B cell (primary cell): ENCODE measurements at regions of chr1 and their contacts with region 1.

Region 1: GRCh38 chr1:101112051-101112780 is 86.6 kb upstream of the DPH5 start:
- DNase-seq: peak; percentile 90
- ATAC-seq: peak; percentile 95
- H3K4me3 ChIP-seq: peak overlapping the region in 1 of 5 experiments; percentile 14
- H3K4me3 Mint-ChIP-seq: peak overlapping the region; percentile 79
- H3K27ac ChIP-seq: peak overlapping the region; percentile 80 to 95
- H3K27ac Mint-ChIP-seq: peak overlapping the region; percentile 89
- H3K4me1 ChIP-seq: peaks cover 28 to 31% of the 10 kb centered on the region in 2 donors
- H3K4me1 Mint-ChIP-seq: peaks cover 39% of the 10 kb centered on the region
- H3K27me3 ChIP-seq: no peaks in the 10 kb centered on the region
- H3K27me3 Mint-ChIP-seq: no peaks in the 10 kb centered on the region
- CTCF ChIP-seq: peak; percentile 32

Region 2: DNA sequence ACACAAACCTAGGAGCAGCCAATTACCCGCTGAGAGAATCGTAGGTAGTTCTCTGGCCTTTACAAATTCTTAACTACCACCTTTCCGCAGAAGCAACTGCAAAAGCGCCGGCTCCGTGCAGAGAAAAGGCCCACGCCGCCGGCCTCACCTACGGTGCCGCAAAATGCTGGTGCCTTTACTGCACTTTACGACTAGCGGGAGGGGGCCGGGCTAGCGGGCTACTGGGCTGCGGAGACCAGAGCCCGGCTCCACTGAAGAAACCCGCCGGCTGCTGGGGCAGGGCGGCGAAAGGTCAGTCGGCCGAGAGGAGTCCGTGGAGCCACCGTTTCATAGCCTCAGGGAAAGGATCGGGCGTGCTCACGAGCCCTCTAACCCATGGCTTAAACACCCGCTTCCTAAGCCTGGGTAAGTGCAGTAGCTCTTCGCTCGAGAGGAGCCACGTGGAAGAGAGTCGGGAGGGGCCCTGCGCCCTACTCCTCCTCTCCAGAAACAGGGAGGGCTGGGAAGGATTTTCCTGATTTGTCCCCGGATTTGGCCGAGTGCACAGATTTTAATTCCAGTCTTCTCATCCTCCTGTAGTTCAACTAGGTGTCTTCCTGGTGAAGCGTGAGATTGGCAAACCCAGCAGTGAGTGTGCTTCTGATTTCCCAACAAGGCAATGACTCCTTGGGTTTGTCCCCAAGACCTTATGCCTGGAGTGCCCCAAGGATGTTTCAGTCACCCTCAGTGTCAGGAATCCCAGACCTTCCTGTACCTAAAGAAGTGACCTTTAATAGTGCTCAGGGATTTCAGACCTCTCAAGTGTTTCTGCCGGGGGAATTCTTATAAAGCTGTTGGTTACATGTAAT is 86.3 kb before region 1 on chr1 and contains the start of gene DPH5:
- CTCF ChIA-PET with region 1: no interaction called
- POLR2A ChIA-PET with region 1: no interaction called
- intact Hi-C with region 1: loop called (anchors 1 kb)
- DNase-seq: peak; percentile 90
- ATAC-seq: peak; percentile 96
- H3K4me3 ChIP-seq: peak within 1 kb of the TSS; percentile 81 to 97 (median 92)
- H3K4me3 Mint-ChIP-seq: peak within 1 kb of the TSS; percentile 98
- H3K27ac ChIP-seq: peak within 1 kb of the TSS; percentile 78 to 85
- H3K27ac Mint-ChIP-seq: peak within 1 kb of the TSS; percentile 97
- H3K4me1 ChIP-seq: peaks cover 45 to 47% of the 10 kb centered on the region in 2 donors
- H3K4me1 Mint-ChIP-seq: peaks cover 50% of the 10 kb centered on the region
- H3K27me3 ChIP-seq: no peaks in the 10 kb centered on the region
- H3K27me3 Mint-ChIP-seq: no peaks in the 10 kb centered on the region
- CTCF ChIP-seq: no peak
- total RNA-seq, gene DPH5: 39.4 and 42.5 TPM in 2 replicates

Region 3: DNA sequence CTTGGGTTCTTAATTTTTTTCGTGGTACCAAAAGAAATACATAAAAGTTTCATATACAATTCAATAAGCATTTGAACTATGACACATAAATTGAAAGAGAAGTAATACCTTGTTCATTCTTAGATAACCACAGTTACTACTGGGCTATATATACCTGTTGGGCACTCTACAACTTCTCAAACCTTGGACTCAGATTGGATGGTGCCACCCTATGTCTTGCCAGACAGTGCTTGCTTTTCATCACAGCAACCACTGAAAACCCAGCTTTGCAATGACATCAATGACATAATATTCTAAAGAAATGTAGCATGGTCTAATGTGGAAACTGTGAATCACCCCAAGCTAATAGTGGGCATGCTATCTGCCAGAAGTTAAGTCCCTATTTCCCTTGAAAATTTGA is 23.8 kb before region 1 on chr1:
- CTCF ChIA-PET with region 1: no interaction called
- POLR2A ChIA-PET with region 1: no interaction called
- intact Hi-C with region 1: no loop called
- DNase-seq: no peak
- ATAC-seq: no peak
- H3K4me3 ChIP-seq: no peak overlapping the region
- H3K4me3 Mint-ChIP-seq: no peak overlapping the region
- H3K27ac ChIP-seq: no peak overlapping the region
- H3K27ac Mint-ChIP-seq: no peak overlapping the region
- H3K4me1 ChIP-seq: peaks cover 0 to 3% of the 10 kb centered on the region in 2 donors
- H3K4me1 Mint-ChIP-seq: peaks cover 11% of the 10 kb centered on the region
- H3K27me3 ChIP-seq: no peaks in the 10 kb centered on the region
- H3K27me3 Mint-ChIP-seq: no peaks in the 10 kb centered on the region
- CTCF ChIP-seq: no peak

Region 4: DNA sequence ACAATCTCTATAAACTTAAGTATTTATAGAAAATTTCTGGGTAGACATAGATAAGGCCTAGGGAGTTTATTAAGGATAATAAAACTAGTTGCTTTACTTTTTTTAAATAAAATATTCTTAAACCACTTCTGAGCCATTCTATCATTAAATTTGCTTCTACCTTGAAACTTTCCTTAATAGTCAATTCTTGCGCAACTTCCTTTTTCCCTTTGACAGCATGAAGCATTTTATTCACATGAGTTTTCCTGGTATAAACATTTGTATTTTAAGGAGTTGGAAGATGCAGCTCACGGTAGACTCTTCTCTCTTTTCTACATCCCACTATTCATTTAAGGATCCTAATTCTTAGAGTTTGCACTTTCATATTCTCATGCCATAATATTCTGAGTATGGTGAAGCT is 10.9 kb before region 1 on chr1:
- CTCF ChIA-PET with region 1: no interaction called
- POLR2A ChIA-PET with region 1: no interaction called
- intact Hi-C with region 1: no loop called
- DNase-seq: no peak
- ATAC-seq: no peak
- H3K4me3 ChIP-seq: no peak overlapping the region
- H3K4me3 Mint-ChIP-seq: no peak overlapping the region
- H3K27ac ChIP-seq: no peak overlapping the region
- H3K27ac Mint-ChIP-seq: no peak overlapping the region
- H3K4me1 ChIP-seq: peaks cover 3 to 8% of the 10 kb centered on the region in 2 donors
- H3K4me1 Mint-ChIP-seq: peaks cover 14% of the 10 kb centered on the region
- H3K27me3 ChIP-seq: no peaks in the 10 kb centered on the region
- H3K27me3 Mint-ChIP-seq: no peaks in the 10 kb centered on the region
- CTCF ChIP-seq: no peak

Region 5: DNA sequence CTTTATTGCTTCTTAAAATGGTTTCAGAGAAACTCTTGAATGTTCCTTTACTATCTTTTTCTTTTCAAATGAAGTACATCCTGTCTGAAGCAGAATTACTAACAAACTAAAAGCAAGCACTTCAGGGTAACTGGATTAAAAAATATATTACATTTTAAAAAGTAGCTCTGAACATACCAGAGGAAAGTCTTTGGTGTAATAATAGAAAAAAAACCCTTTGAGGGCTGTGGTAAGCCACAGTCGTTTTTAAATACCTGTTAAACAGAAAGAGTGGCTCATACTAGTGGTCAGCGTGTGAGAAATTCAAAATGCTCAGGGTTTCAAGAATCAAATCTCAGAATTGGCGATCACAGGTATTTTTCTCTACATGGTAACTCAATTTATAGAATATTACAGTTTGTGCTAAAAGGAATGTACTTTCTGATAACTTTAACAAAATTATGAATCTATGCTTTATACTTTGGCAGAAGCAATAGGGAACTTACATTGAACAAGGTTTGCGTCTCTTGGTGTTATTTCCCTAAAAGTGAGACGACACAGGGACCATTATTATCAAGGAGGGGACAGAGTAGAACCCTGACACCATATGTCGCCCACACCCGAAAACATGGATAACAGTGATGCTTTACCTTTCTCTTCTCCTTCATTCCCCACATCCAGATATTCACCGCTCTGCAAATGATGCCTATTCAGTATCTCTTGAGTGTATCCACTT is 10.4 kb after region 1 on chr1:
- CTCF ChIA-PET with region 1: interaction called, 20 read pairs
- POLR2A ChIA-PET with region 1: interaction called, 20 read pairs
- intact Hi-C with region 1: no loop called
- DNase-seq: peak; percentile 39
- ATAC-seq: peak; percentile 21
- H3K4me3 ChIP-seq: peak overlapping the region in 3 of 5 experiments; percentile 3 to 47 (median 6)
- H3K4me3 Mint-ChIP-seq: peak overlapping the region; percentile 73
- H3K27ac ChIP-seq: peak overlapping the region in 1 of 2 donors; percentile 58
- H3K27ac Mint-ChIP-seq: peak overlapping the region; percentile 44
- H3K4me1 ChIP-seq: peaks cover 17 to 31% of the 10 kb centered on the region in 2 donors
- H3K4me1 Mint-ChIP-seq: peaks cover 46% of the 10 kb centered on the region
- H3K27me3 ChIP-seq: no peaks in the 10 kb centered on the region
- H3K27me3 Mint-ChIP-seq: no peaks in the 10 kb centered on the region
- CTCF ChIP-seq: no peak

Region 6: GRCh38 chr1:101128211-101128727 is 16.1 kb after region 1 on chr1:
- CTCF ChIA-PET with region 1: interaction called, 20 read pairs
- POLR2A ChIA-PET with region 1: interaction called, 20 read pairs
- intact Hi-C with region 1: loop called (anchors 1 kb)
- DNase-seq: peak; percentile 75
- ATAC-seq: peak; percentile 93
- H3K4me3 ChIP-seq: peak overlapping the region in 3 of 5 experiments; percentile 37 to 59 (median 40)
- H3K4me3 Mint-ChIP-seq: peak overlapping the region; percentile 57
- H3K27ac ChIP-seq: peak overlapping the region; percentile 59 to 74
- H3K27ac Mint-ChIP-seq: peak overlapping the region; percentile 83
- H3K4me1 ChIP-seq: peaks cover 30 to 49% of the 10 kb centered on the region in 2 donors
- H3K4me1 Mint-ChIP-seq: peaks cover 60% of the 10 kb centered on the region
- H3K27me3 ChIP-seq: no peaks in the 10 kb centered on the region
- H3K27me3 Mint-ChIP-seq: no peaks in the 10 kb centered on the region
- CTCF ChIP-seq: no peak

Region 7: GRCh38 chr1:101136739-101137138 is 24.5 kb after region 1 on chr1:
- CTCF ChIA-PET with region 1: interaction called, 24 read pairs
- POLR2A ChIA-PET with region 1: no interaction called
- intact Hi-C with region 1: no loop called
- DNase-seq: peak; percentile 54
- ATAC-seq: peak; percentile 70
- H3K4me3 ChIP-seq: no peak overlapping the region
- H3K4me3 Mint-ChIP-seq: peak overlapping the region; percentile 17
- H3K27ac ChIP-seq: peak overlapping the region; percentile 1 to 32
- H3K27ac Mint-ChIP-seq: peak overlapping the region; percentile 70
- H3K4me1 ChIP-seq: peaks cover 38 to 40% of the 10 kb centered on the region in 2 donors
- H3K4me1 Mint-ChIP-seq: peaks cover 49% of the 10 kb centered on the region
- H3K27me3 ChIP-seq: no peaks in the 10 kb centered on the region
- H3K27me3 Mint-ChIP-seq: no peaks in the 10 kb centered on the region
- CTCF ChIP-seq: no peak

Region 8: GRCh38 chr1:101167891-101168290 is 55.7 kb after region 1 on chr1:
- CTCF ChIA-PET with region 1: no interaction called
- POLR2A ChIA-PET with region 1: no interaction called
- intact Hi-C with region 1: no loop called
- DNase-seq: no peak
- ATAC-seq: no peak
- H3K4me3 ChIP-seq: no peak overlapping the region
- H3K4me3 Mint-ChIP-seq: no peak overlapping the region
- H3K27ac ChIP-seq: no peak overlapping the region
- H3K27ac Mint-ChIP-seq: no peak overlapping the region
- H3K4me1 ChIP-seq: no peaks in the 10 kb centered on the region
- H3K4me1 Mint-ChIP-seq: no peaks in the 10 kb centered on the region
- H3K27me3 ChIP-seq: no peaks in the 10 kb centered on the region
- H3K27me3 Mint-ChIP-seq: no peaks in the 10 kb centered on the region
- CTCF ChIP-seq: no peak

Region 9: GRCh38 chr1:101257500-101258325 is 145.5 kb after region 1 on chr1:
- CTCF ChIA-PET with region 1: no interaction called
- POLR2A ChIA-PET with region 1: interaction called, 19 read pairs
- intact Hi-C with region 1: no loop called
- DNase-seq: peak; percentile 57
- ATAC-seq: peak; percentile 74
- H3K4me3 ChIP-seq: no peak overlapping the region
- H3K4me3 Mint-ChIP-seq: peak overlapping the region; percentile 32
- H3K27ac ChIP-seq: peak overlapping the region in 1 of 2 donors; percentile 20
- H3K27ac Mint-ChIP-seq: peak overlapping the region; percentile 59
- H3K4me1 ChIP-seq: peaks cover 27 to 32% of the 10 kb centered on the region in 2 donors
- H3K4me1 Mint-ChIP-seq: peaks cover 46% of the 10 kb centered on the region
- H3K27me3 ChIP-seq: no peaks in the 10 kb centered on the region
- H3K27me3 Mint-ChIP-seq: no peaks in the 10 kb centered on the region
- CTCF ChIP-seq: no peak